ENCODE measurements at regions of chr1 and their contacts with region 1.

Region 1: DNA sequence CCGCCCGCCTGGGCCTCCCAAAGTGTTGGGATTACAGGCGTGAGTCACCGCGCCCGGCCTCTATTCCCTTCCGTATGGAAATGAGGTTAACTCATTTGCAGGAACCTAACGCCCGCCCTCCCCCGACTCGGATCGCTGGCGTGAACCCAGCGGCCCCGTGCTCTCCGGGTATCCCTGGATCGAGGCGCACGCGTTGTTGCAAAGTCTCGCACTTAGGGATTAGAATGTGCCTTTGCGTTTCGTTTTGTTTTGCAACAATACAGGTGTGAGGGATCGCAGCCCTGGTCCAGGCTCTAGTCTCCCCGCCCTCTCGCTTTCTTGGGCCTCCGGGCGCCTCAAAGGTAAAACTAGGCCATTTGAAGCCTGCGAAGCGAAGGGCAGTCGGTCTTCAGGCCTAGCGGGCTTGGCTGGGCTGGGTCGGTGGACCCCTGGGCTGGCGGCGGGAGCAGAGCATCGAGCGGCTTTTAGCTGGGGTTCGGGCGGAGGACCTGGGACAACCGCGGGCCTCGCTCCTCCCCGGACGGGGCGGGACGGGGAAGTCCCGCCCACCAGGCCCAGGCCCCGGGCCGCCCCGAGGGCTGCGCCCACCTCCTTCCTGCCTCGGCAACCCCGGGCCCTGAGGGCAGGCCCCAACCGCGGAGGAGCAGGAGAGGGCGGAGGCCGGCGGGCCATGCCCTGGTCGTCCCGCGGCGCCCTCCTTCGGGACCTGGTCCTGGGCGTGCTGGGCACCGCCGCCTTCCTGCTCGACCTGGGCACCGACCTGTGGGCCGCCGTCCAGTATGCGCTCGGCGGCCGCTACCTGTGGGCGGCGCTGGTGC is at the start of gene XKR8:
- DNase-seq: peak; percentile 82
- H3K4me3 ChIP-seq: peak within 1 kb of the TSS; percentile 56 to 71 (median 60)
- H3K27ac ChIP-seq: peak within 1 kb of the TSS; percentile 74
- H3K4me1 ChIP-seq: peaks cover 18% of the 10 kb centered on the region
- H3K27me3 ChIP-seq: no peaks in the 10 kb centered on the region
- CTCF ChIP-seq: peak; percentile 41 to 68
- POLR2A ChIP-seq: peak; percentile 83
- total RNA-seq, gene XKR8: 10.0 TPM in 2 replicates

Region 2: DNA sequence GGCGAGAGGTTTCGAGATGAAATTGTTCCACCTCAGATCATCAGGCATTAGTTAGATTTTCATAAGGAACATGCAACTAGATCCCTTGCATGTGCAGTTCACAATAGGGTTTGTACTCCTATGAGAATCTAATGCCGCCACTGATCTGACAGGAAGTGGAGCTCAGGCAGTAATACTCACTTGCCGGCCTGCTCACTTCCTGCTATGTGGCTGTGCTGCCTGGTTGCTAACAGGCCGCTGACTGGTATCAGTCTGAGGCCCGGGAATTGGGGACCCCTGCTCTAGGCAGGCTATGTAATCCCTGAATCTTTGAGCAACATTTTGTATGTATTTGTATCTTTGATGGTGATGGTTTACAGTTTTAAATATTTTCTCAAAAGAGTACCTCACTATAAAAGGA is 32.7 kb after region 1 on chr1:
- CTCF ChIA-PET with region 1: no interaction called
- POLR2A ChIA-PET with region 1: no interaction called
- dilution Hi-C with region 1: no loop called
- intact Hi-C with region 1: loop called (anchors 1 kb)
- DNase-seq: peak; percentile 60
- H3K4me3 ChIP-seq: no peak overlapping the region
- H3K27ac ChIP-seq: peak overlapping the region; percentile 46
- H3K4me1 ChIP-seq: peaks cover 35% of the 10 kb centered on the region
- H3K27me3 ChIP-seq: no peaks in the 10 kb centered on the region
- CTCF ChIP-seq: no peak
- POLR2A ChIP-seq: no peak